Endothelial cell of umbilical vein (primary cell): ENCODE measurements at regions of chr4 and their contacts with region 1.

Region 1: GRCh38 chr4:149370785-149371420 is 444.7 kb downstream of the IQCM start:
- DNase-seq: peak; percentile 46
- H3K4me3 ChIP-seq: no peak overlapping the region
- H3K27ac ChIP-seq: no peak overlapping the region
- H3K4me1 ChIP-seq: no peaks in the 10 kb centered on the region
- H3K27me3 ChIP-seq: no peaks in the 10 kb centered on the region
- CTCF ChIP-seq: peak in 1 of 2 donors; percentile 16
- POLR2A ChIP-seq: no peak

Region 2: DNA sequence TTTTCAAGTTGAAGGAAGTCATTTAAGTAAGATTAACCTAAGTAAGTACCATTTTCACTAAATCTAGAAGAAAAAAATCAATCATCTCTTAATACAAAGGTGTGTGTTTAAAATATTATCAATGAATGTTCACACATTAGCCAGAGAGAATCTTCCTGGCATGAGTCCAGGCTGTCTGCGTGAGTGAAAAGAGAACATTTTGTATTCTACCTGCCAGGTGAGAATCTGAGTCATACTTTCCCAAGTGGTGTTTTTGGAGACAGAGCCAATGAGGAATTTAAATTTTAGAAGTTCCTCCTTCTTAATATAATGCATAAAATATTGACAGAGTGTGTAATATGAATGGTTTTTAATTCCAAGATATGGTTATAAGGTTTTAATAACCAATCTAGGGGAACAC is 556.9 kb before region 1 on chr4:
- CTCF ChIA-PET with region 1: no interaction called
- POLR2A ChIA-PET with region 1: no interaction called
- dilution Hi-C with region 1: no loop called
- intact Hi-C with region 1: no loop called
- DNase-seq: no peak
- H3K4me3 ChIP-seq: no peak overlapping the region
- H3K27ac ChIP-seq: no peak overlapping the region
- H3K4me1 ChIP-seq: no peaks in the 10 kb centered on the region
- H3K27me3 ChIP-seq: no peaks in the 10 kb centered on the region
- CTCF ChIP-seq: no peak
- POLR2A ChIP-seq: no peak

Region 3: DNA sequence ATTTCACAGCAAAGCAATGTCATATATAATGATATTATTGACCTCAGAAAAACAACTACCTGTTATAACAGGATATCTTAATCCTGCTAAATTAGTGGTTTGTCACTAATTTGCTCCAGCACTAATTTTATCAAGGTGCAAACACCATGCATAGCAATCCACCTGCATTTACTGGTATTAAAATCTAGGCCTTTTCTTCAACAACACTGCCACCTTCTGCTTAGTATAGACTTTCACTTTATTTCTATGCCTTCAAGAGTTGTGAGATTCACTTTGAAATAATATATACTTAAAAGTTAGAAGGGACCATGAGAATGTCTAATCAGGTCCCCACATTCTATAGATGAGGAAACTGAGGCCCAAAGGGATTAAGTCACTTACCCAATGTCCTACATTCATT is 526.9 kb after region 1 on chr4:
- CTCF ChIA-PET with region 1: interaction called, 21 read pairs
- POLR2A ChIA-PET with region 1: no interaction called
- dilution Hi-C with region 1: no loop called
- intact Hi-C with region 1: loop called (anchors 1 kb)
- DNase-seq: peak; percentile 35
- H3K4me3 ChIP-seq: no peak overlapping the region
- H3K27ac ChIP-seq: no peak overlapping the region
- H3K4me1 ChIP-seq: no peaks in the 10 kb centered on the region
- H3K27me3 ChIP-seq: no peaks in the 10 kb centered on the region
- CTCF ChIP-seq: peak in 1 of 2 donors; percentile 7
- POLR2A ChIP-seq: no peak

Region 4: DNA sequence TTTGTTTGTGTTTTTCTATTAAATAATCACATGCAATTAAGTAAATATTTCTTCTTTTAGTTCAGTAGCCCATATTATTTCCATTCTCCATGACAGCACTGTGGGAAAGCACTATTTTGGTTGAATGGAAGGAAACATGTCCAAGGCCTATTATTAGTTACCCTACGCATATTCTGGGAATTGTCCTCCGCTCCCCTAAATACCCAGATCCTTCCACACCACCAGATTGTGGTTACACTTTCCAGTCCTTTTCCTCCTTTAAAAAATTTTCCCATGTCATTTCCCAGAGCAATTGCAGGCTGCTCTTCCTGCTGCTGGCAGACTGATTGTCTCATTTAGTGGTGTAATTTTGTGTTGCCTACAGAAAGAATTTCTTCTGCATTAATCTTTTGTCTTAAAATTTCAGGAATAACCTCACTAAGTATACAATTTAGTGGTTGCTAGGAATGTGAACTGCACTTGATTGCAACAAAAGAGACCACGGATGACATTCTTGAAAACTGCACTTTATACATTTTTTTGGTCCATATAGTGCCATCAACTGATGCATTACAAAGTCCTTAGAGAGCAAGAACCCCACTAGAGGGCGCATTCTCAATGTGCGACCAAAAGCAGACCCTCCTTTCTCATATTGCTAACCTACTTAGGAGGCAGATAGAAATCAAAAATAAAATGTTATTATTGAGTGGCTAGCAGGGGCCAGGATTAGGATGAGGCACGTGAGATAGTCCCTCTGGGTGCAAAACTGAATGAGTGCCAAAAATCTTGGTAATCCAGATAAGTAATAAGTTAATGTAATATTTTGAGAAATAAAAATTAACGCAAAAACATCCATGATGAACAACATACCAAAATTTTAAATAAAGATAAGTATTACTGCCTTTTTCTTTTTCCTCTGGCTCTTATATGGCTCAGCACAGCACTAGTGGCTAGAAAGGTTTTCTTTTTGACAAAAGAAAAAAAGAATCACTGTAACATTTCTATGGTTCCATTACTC is 543.5 kb after region 1 on chr4:
- CTCF ChIA-PET with region 1: no interaction called
- POLR2A ChIA-PET with region 1: no interaction called
- dilution Hi-C with region 1: no loop called
- intact Hi-C with region 1: loop called (anchors 5 kb)
- DNase-seq: peak; percentile 65
- H3K4me3 ChIP-seq: no peak overlapping the region
- H3K27ac ChIP-seq: no peak overlapping the region
- H3K4me1 ChIP-seq: peaks cover 11% of the 10 kb centered on the region
- H3K27me3 ChIP-seq: no peaks in the 10 kb centered on the region
- CTCF ChIP-seq: peak; percentile 70 to 79
- POLR2A ChIP-seq: no peak